ENCODE measurements at regions of chr11 and their contacts with region 1.

Region 1: DNA sequence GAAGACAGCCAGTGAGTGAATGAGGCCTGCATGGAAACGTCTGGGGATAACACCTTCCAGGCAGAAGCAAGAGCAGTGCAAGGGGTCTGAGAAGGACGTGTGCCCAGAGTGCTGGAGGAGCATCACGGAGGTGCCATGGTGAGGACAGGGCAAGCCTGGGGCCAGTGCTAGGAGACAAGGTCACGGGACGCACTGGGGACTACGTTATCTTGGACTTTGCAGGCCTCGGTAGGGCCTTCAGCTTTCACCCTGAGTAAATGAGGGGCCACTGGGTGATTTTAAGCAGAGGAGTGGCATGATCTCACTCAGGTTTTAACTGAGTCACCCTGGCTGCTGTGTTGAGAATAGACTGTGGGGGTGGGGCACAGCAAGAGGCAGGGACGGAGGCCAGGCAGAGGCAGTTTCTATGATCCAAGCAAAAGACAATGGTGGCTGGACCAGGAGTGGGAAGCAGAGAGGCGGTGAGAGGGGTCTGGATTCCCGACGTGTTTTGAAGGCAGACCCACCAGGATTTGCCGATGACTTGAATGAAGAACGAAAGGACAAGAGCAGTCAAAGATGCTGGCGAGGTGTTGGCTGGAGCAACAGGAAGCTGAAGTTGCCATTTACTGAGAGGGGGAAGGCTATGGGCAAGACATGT is 102.7 kb upstream of the PARVA start:
- DNase-seq: no peak
- ATAC-seq: no peak
- H3K4me3 ChIP-seq: no peak overlapping the region
- H3K27ac ChIP-seq: no peak overlapping the region
- H3K4me1 ChIP-seq: peaks cover 0 to 10% (median 2%) of the 10 kb centered on the region in 9 donors
- H3K27me3 ChIP-seq: no peaks in the 10 kb centered on the region
- CTCF ChIP-seq: no peak

Region 2: GRCh38 chr11:11931461-11932055 is 343.1 kb before region 1 on chr11:
- intact Hi-C with region 1: loop called in 1 of 10 experiments (anchors 5 kb)
- DNase-seq: peak in 1 of 2 donors; percentile 27
- ATAC-seq: peak in 6 of 8 donors; percentile 55 to 73 (median 63)
- H3K4me3 ChIP-seq: no peak overlapping the region
- H3K27ac ChIP-seq: no peak overlapping the region
- H3K4me1 ChIP-seq: peaks cover 0 to 6% (median 0%) of the 10 kb centered on the region in 9 donors
- H3K27me3 ChIP-seq: no peaks in the 10 kb centered on the region
- CTCF ChIP-seq: peak; percentile 40 to 79 (median 73)